WTC11 (cell line): ENCODE measurements at regions of chr12 and their contacts with region 1.

Region 1: GRCh38 chr12:113348849-113349536 is 9.4 kb upstream of the PLBD2 start:
- DNase-seq: no peak
- ATAC-seq: peak; percentile 87
- H3K4me3 Mint-ChIP-seq: peak overlapping the region; percentile 47
- H3K27ac Mint-ChIP-seq: peak overlapping the region; percentile 63
- H3K4me1 Mint-ChIP-seq: peaks cover 18% of the 10 kb centered on the region
- H3K27me3 Mint-ChIP-seq: no peaks in the 10 kb centered on the region
- CTCF ChIP-seq: no peak

Region 2: DNA sequence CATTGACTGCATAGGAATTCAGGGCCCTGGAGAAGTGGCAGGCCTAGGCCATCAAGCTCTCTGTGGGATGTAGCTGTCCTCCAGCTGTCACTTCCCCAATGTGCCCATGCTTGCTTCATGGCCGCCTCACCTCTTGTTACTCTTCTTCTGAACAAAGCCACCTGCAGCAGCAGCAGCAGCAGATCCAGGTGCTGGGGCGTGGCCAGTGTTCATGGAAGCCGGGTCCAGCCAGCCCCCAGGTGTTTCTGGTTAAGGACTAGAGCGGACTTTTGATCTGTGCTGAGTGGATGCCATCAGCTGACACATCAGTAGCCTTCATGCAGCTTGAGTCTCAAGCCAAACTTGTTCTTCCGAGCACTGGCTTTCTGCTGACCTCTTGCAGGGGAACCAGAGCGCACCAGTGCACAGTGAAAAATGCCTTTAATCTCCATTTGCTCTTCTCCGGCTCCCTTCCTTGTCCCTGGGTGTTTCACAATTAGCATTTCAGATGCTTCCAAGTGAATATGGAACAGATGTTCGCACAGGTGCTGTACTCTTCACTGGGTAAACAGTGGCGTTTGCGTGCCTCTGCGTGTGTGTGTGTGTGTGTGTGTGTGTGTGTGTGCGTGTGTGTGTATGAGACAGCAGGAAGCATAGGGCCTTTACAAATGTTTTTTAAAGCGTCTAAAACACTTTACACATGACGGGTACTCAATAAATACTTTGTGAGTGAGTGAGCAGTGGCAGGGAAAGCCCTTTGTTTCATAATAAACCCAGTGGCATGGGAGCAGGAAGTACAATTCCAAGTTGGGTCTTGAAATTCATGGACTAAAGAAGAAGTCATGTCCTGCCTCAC is 107.6 kb before region 1 on chr12:
- CTCF ChIA-PET with region 1: no interaction called
- POLR2A ChIA-PET with region 1: interaction called, 16 read pairs
- DNase-seq: no peak
- ATAC-seq: no peak
- H3K4me3 Mint-ChIP-seq: no peak overlapping the region
- H3K27ac Mint-ChIP-seq: peak overlapping the region; percentile 49; the same call in 1 of the 2 replicates
- H3K4me1 Mint-ChIP-seq: peaks cover 46% of the 10 kb centered on the region
- H3K27me3 Mint-ChIP-seq: no peaks in the 10 kb centered on the region
- CTCF ChIP-seq: no peak

Region 3: DNA sequence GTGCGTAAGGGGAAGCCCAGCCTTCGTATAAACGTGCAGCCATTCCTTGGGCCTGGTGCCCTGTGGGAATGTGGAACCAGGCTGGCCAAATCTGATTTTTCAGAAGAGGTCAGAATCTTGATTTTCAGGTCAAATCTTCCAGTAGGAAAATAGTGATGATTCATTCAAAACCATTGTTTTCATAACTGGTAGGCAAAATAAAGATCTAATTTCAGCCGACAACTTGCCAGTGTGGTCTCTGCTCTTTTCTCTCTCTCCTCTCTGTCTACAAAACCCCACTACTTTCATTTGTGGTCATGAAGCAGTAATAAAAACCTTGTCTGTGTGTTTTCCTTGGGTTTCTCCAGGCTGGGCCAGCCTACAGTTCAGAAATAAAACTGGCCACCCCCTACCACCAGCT is 482.0 kb after region 1 on chr12:
- CTCF ChIA-PET with region 1: no interaction called
- POLR2A ChIA-PET with region 1: no interaction called
- DNase-seq: no peak
- ATAC-seq: no peak
- H3K4me3 Mint-ChIP-seq: no peak overlapping the region
- H3K27ac Mint-ChIP-seq: peak overlapping the region; percentile 95
- H3K4me1 Mint-ChIP-seq: peaks cover 7% of the 10 kb centered on the region
- H3K27me3 Mint-ChIP-seq: no peaks in the 10 kb centered on the region
- CTCF ChIP-seq: no peak